Heart left ventricle (tissue), 16 donors: ENCODE measurements at regions of chr18 and their contacts with region 1.

Region 1: GRCh38 chr18:9587924-9588323 is 26.4 kb downstream of the PPP4R1 start:
- DNase-seq: peak in 1 of 5 donors; percentile 38
- ATAC-seq: peak; percentile 56 to 92 (median 82)
- H3K4me3 ChIP-seq: no peak overlapping the region
- H3K27ac ChIP-seq: peak overlapping the region in 2 of 12 donors; percentile 10 to 18
- H3K4me1 ChIP-seq: peaks cover 0 to 4% (median 0%) of the 10 kb centered on the region in 12 donors
- H3K27me3 ChIP-seq: no peaks in the 10 kb centered on the region
- CTCF ChIP-seq: no peak
- POLR2A ChIP-seq: no peak

Region 2: GRCh38 chr18:9673296-9674251 is 85.7 kb after region 1 on chr18:
- intact Hi-C with region 1: loop called in 1 of 10 experiments (anchors 5 kb)
- DNase-seq: peak in 3 of 5 donors; percentile 34 to 44 (median 36)
- ATAC-seq: peak; percentile 81 to 96 (median 95)
- H3K4me3 ChIP-seq: no peak overlapping the region
- H3K27ac ChIP-seq: peak overlapping the region in 2 of 12 donors; percentile 25 to 36
- H3K4me1 ChIP-seq: peaks cover 0 to 9% (median 0%) of the 10 kb centered on the region in 12 donors
- H3K27me3 ChIP-seq: no peaks in the 10 kb centered on the region
- CTCF ChIP-seq: peak in 8 of 12 donors; percentile 8 to 48 (median 32)
- POLR2A ChIP-seq: peak in 1 of 2 donors; percentile 9

Region 3: GRCh38 chr18:10525371-10526210 is 937.7 kb after region 1 on chr18 and contains the start of gene NAPG:
- intact Hi-C with region 1: loop called in 1 of 10 experiments (anchors 10 kb)
- DNase-seq: peak; percentile 94 to 96 (median 96)
- ATAC-seq: peak; percentile 84 to 96 (median 94)
- H3K4me3 ChIP-seq: peak within 1 kb of the TSS; percentile 57 to 98 (median 79)
- H3K27ac ChIP-seq: peak within 1 kb of the TSS; percentile 88 to 99 (median 95)
- H3K4me1 ChIP-seq: peaks cover 0 to 47% (median 31%) of the 10 kb centered on the region in 12 donors
- H3K27me3 ChIP-seq: no peaks in the 10 kb centered on the region
- CTCF ChIP-seq: peak in 1 of 12 donors; percentile 16
- POLR2A ChIP-seq: peak in 1 of 2 donors; percentile 62
- total RNA-seq, gene NAPG: 26.7 to 46.3 (median 35.1) TPM